Aorta (tissue), 5 donors: ENCODE measurements at regions of chr2 and their contacts with region 1.

Region 1: DNA sequence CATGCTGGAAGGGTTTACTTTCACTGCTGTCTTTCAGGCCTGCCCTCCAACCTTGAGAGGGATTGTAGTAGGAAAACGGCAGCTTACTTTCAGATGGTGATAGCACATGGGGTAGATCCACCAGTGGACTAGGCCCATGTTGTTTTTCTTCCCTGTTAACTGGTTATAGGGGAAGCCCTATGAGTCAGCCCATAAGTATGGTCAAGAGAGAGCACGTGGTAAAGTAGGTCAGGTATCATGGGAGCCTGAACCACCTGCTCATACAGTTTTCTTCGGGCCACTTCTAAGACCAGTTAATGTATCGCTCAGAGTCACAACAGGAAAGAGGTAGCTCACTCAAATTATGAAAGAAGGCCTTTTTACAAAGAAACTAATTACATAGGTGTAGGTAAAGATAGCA is 33.0 kb downstream of the PDK1 start:
- DNase-seq: no peak
- ATAC-seq: no peak
- H3K4me3 ChIP-seq: no peak overlapping the region
- H3K27ac ChIP-seq: no peak overlapping the region
- H3K4me1 ChIP-seq: no peaks in the 10 kb centered on the region
- H3K27me3 ChIP-seq: no peaks in the 10 kb centered on the region

Region 2: DNA sequence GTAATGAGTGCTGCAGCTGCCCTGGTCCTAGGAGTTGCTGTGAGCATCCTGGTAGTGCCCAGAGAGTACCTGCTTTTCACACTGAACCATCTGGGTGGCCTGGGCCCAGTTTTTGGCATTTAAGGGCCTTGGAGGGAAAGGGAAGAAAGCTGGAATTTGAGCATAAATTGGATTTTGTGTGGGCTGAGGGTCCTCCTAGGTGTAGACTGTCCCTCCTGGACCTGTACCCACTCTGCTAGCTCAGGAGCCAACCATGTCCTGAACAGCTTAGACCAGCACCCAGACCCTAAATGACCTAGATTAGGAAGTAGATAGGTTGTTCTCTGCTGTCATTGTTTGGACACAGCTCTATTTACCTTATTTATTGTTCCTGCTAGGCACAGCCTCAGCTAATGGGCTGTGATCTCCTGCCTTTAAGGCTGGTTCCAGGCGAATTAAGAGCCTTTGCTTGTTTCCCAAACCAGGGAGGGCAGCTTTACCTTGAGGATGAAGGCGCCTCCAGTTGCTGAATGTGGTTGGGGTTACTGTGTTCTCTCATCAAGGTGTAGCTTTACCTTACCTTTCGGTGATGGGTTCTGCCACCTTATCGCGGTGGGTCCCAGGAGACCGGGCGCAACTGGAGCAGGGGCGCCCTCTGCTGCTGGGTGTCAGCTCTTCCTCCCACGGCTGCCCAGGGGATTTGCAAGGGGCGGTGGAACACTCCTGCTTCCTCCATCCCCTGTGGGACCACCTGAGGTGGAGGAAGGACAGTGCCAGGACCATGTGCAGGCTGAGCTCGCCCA is 127.1 kb before region 1 on chr2:
- intact Hi-C with region 1: no loop called
- DNase-seq: peak; percentile 56 to 86
- ATAC-seq: peak; percentile 77
- H3K4me3 ChIP-seq: no peak overlapping the region
- H3K27ac ChIP-seq: no peak overlapping the region
- H3K4me1 ChIP-seq: no peaks in the 10 kb centered on the region
- H3K27me3 ChIP-seq: no peaks in the 10 kb centered on the region

Region 3: GRCh38 chr2:172484253-172484652 is 104.7 kb before region 1 on chr2:
- intact Hi-C with region 1: no loop called
- DNase-seq: no peak
- ATAC-seq: no peak
- H3K4me3 ChIP-seq: no peak overlapping the region
- H3K27ac ChIP-seq: no peak overlapping the region
- H3K4me1 ChIP-seq: no peaks in the 10 kb centered on the region
- H3K27me3 ChIP-seq: no peaks in the 10 kb centered on the region

Region 4: DNA sequence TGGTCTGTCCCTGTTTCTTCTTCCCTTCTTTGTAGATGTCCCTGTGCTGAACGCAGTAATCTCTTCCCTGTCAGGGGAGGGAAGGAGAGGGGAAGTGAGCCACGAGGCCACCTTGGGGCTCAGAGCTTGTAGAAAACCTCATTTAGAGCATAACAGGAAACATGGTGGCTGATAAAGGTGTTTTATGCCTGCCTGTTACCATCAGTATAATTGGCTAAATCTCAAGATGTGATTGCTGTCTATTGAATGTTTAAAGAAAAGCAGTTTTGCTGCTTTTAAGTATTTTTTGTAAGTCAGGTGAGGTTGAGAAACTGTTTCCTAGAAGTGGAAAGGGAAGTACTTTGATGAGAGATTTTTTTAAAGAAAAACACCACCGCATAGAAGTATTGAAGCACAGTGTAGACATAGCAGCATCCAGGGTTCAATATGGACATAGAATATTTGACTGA is 92.7 kb before region 1 on chr2:
- intact Hi-C with region 1: no loop called
- DNase-seq: no peak
- ATAC-seq: no peak
- H3K4me3 ChIP-seq: no peak overlapping the region
- H3K27ac ChIP-seq: no peak overlapping the region
- H3K4me1 ChIP-seq: no peaks in the 10 kb centered on the region
- H3K27me3 ChIP-seq: no peaks in the 10 kb centered on the region

Region 5: GRCh38 chr2:172510088-172510487 is 78.8 kb before region 1 on chr2:
- intact Hi-C with region 1: no loop called
- DNase-seq: no peak
- ATAC-seq: no peak
- H3K4me3 ChIP-seq: no peak overlapping the region
- H3K27ac ChIP-seq: no peak overlapping the region
- H3K4me1 ChIP-seq: no peaks in the 10 kb centered on the region
- H3K27me3 ChIP-seq: no peaks in the 10 kb centered on the region

Region 6: GRCh38 chr2:172555522-172556283 is 33.2 kb before region 1 on chr2 and contains the start of gene PDK1:
- intact Hi-C with region 1: loop called in 1 of 2 experiments (anchors 5 kb)
- DNase-seq: peak; percentile 91 to 95
- ATAC-seq: peak; percentile 99
- H3K4me3 ChIP-seq: peak within 1 kb of the TSS; percentile 54 to 70
- H3K27ac ChIP-seq: peak within 1 kb of the TSS; percentile 58 to 86
- H3K4me1 ChIP-seq: no peaks in the 10 kb centered on the region
- H3K27me3 ChIP-seq: no peaks in the 10 kb centered on the region
- total RNA-seq, gene PDK1: 27.4 to 38.7 TPM

Region 7: DNA sequence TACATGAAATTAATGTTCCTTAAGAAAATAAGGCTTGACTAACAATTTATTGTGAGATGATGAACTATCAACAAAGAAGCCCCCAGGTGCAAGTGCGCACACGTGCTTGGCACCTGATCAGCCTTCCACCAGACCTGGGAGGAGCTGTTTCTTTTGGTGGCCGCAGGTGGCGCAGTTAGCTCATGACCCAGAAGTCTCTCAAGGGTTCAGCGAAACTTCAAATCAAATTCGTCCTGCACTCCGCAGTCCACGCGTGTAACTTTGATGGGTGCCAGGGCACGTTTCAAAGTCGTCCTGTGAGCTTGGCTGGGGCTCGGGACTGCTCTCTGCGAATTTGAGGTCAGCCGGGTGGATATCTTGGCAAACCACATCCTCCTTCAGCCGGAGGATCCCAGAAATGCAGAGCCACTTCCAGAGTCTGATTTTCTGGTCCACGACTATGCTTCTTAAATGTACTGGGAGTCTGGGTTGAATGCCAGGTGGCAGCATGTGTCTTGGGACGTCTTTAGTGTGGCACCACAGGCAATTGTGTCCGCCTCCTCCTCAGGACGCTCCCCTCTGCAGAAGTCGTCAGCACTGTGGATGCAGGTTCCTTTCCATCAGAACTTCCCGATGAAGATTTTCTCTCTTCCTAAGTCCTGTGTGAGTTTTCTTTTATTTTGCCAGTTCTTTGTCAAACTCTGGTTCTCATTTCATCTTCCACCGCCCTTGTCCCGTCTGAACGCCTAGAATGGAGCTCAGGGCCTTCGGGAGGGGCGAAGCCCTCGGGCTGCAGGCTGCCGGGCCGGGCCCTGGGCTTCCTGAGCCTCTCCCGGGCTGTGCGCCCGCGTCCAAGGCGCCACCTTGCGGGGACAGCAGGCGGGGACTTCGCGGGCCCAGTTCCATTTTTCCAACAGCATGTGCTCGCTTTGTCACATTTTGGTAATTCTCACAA is 85.4 kb after region 1 on chr2:
- intact Hi-C with region 1: loop called in 1 of 2 experiments (anchors 2 kb)
- DNase-seq: peak; percentile 60 to 83
- ATAC-seq: peak; percentile 87
- H3K4me3 ChIP-seq: no peak overlapping the region
- H3K27ac ChIP-seq: no peak overlapping the region
- H3K4me1 ChIP-seq: no peaks in the 10 kb centered on the region
- H3K27me3 ChIP-seq: no peaks in the 10 kb centered on the region

Region 8: GRCh38 chr2:172710584-172711024 is 121.7 kb after region 1 on chr2:
- intact Hi-C with region 1: loop called (anchors 5 kb)
- DNase-seq: no peak
- ATAC-seq: peak; percentile 43
- H3K4me3 ChIP-seq: no peak overlapping the region
- H3K27ac ChIP-seq: no peak overlapping the region
- H3K4me1 ChIP-seq: no peaks in the 10 kb centered on the region
- H3K27me3 ChIP-seq: peaks cover 0 to 1% of the 10 kb centered on the region in 2 donors